ENCODE measurements at regions of chr6 and their contacts with region 1.

Region 1: DNA sequence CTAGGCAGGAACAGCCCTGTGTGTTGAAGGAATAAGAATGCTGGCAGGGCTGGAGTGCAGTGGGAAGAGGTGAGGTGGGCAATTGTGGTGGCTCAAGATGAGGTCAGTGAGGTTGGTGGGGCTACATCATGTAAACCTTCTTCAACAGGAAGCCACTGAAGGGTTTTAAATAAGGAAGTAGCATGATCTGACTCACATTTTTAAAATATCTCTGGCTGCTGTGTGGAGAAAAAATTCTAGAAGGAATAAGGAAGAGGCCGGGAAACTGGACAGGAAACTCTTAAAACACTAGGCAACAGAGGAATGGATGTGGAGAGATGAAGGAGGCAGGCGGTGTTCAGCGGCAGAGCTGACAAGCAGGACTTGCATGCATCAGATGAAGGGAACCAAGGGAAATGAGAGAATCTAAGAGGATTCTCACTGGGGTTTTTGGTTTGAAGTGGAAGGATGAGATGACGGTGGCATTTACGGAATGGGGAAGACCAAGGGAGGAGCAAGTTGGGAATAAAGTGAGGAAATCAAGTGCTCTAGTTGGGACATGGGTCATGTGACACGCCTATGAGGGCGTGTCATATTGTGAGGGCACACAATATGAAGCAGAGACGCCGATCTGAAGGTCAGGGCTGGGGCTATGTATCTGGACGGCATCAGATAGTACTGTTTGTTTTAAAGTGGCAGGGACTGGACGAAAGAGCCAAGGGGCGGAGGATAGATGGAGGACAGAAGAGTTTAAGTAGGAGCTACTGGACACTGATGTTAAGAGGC is 18.2 kb downstream of the TMEM242 start:
- DNase-seq: peak; percentile 85
- H3K4me3 ChIP-seq: peak overlapping the region in 2 of 3 experiments; percentile 10 to 47
- H3K27ac ChIP-seq: peak overlapping the region; percentile 86
- H3K4me1 ChIP-seq: peaks cover 29% of the 10 kb centered on the region
- H3K27me3 ChIP-seq: no peaks in the 10 kb centered on the region
- CTCF ChIP-seq: no peak
- POLR2A ChIP-seq: no peak

Region 2: GRCh38 chr6:157269261-157269794 is 35.8 kb before region 1 on chr6:
- CTCF ChIA-PET with region 1: no interaction called
- POLR2A ChIA-PET with region 1: no interaction called
- dilution Hi-C with region 1: no loop called
- intact Hi-C with region 1: loop called (anchors 1 kb)
- DNase-seq: peak; percentile 94
- H3K4me3 ChIP-seq: no peak overlapping the region
- H3K27ac ChIP-seq: peak overlapping the region; percentile 4
- H3K4me1 ChIP-seq: peaks cover 15% of the 10 kb centered on the region
- H3K27me3 ChIP-seq: no peaks in the 10 kb centered on the region
- CTCF ChIP-seq: no peak
- POLR2A ChIP-seq: peak; percentile 40

Region 3: GRCh38 chr6:157289764-157290163 is 15.3 kb before region 1 on chr6:
- CTCF ChIA-PET with region 1: interaction called, 13 read pairs
- POLR2A ChIA-PET with region 1: no interaction called
- dilution Hi-C with region 1: no loop called
- intact Hi-C with region 1: no loop called
- DNase-seq: no peak
- H3K4me3 ChIP-seq: no peak overlapping the region
- H3K27ac ChIP-seq: no peak overlapping the region
- H3K4me1 ChIP-seq: no peaks in the 10 kb centered on the region
- H3K27me3 ChIP-seq: no peaks in the 10 kb centered on the region
- CTCF ChIP-seq: no peak
- POLR2A ChIP-seq: no peak

Region 4: GRCh38 chr6:157981395-157982296 is 676.6 kb after region 1 on chr6 and contains the start of gene SYNJ2:
- CTCF ChIA-PET with region 1: no interaction called
- POLR2A ChIA-PET with region 1: no interaction called
- dilution Hi-C with region 1: no loop called
- intact Hi-C with region 1: no loop called
- DNase-seq: peak; percentile 73
- H3K4me3 ChIP-seq: peak within 1 kb of the TSS; percentile 59 to 91 (median 87)
- H3K27ac ChIP-seq: peak within 1 kb of the TSS; percentile 85
- H3K4me1 ChIP-seq: peaks cover 21% of the 10 kb centered on the region
- H3K27me3 ChIP-seq: no peaks in the 10 kb centered on the region
- CTCF ChIP-seq: peak; percentile 67 to 79
- POLR2A ChIP-seq: peak; percentile 38
- total RNA-seq, gene SYNJ2: 71.8 and 78.2 TPM in 2 replicates